Activated CD4-positive, alpha-beta T cell treated with anti-CD3 and anti-CD28 coated beads for 36 hours (primary cell): ENCODE measurements at regions of chr22 and their contacts with region 1.

Region 1: GRCh38 chr22:31749636-31750364 is at the start of gene PRR14L:
- DNase-seq: peak; percentile 100
- ATAC-seq: peak; percentile 71
- H3K4me3 Mint-ChIP-seq: peak within 1 kb of the TSS; percentile 89
- H3K27ac Mint-ChIP-seq: peak within 1 kb of the TSS; percentile 93
- H3K4me1 Mint-ChIP-seq: peaks cover 43% of the 10 kb centered on the region
- H3K27me3 Mint-ChIP-seq: no peaks in the 10 kb centered on the region
- total RNA-seq, gene PRR14L: 48.2 to 52.2 TPM

Region 2: DNA sequence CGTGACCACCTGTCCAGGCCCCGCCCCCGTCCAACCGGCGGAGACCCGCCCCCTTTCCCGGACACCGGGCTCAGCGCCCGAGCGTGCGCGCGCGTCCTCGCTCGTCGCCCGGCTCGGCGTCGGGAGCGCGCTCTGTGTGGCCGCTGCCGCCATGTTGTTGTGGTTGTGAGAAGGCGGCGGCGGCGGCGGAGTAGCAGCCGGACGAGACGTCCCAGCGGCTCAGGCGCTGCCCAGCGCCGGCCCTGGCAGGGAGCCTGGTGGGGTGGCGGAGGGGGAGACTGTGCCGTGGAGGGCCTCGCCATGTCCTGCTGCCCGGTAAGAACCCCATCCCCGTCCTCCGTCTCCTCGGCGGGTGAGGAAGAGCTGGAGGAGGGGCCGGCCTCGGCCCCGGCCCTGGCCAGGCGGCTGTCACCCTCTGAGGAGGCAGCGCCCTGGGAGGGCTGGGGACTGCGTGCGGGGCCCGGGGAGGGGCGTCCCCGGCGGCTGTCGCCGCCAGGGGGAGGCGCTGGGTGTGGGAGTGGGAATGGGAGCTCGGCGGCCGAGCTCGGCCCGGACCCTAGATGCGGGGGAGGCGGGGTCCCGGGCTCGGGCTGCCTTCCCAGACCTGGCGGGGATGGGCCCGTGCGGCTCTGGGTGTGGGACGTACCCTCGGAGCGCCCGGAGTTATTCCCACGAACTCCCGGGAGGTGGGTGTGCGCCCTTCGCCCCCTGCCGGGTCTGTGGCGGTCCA is 1866.6 kb before region 1 on chr22 and contains the start of gene MTMR3:
- CTCF ChIA-PET with region 1: no interaction called
- POLR2A ChIA-PET with region 1: no interaction called
- intact Hi-C with region 1: loop called in 1 of 2 experiments (anchors 2 kb)
- DNase-seq: peak; percentile 95
- ATAC-seq: peak; percentile 83
- H3K4me3 Mint-ChIP-seq: peak within 1 kb of the TSS; percentile 89
- H3K27ac Mint-ChIP-seq: peak within 1 kb of the TSS; percentile 84
- H3K4me1 Mint-ChIP-seq: peaks cover 6% of the 10 kb centered on the region
- H3K27me3 Mint-ChIP-seq: no peaks in the 10 kb centered on the region
- total RNA-seq, gene MTMR3: 19.2 to 22.8 TPM

Region 3: GRCh38 chr22:31080848-31081649 is 668.8 kb before region 1 on chr22 and contains the start of gene SMTN:
- CTCF ChIA-PET with region 1: no interaction called
- POLR2A ChIA-PET with region 1: no interaction called
- intact Hi-C with region 1: loop called in 1 of 2 experiments (anchors 1 kb)
- DNase-seq: peak; percentile 92
- ATAC-seq: peak; percentile 67
- H3K4me3 Mint-ChIP-seq: peak within 1 kb of the TSS; percentile 82
- H3K27ac Mint-ChIP-seq: peak within 1 kb of the TSS; percentile 63
- H3K4me1 Mint-ChIP-seq: peaks cover 30% of the 10 kb centered on the region
- H3K27me3 Mint-ChIP-seq: no peaks in the 10 kb centered on the region
- total RNA-seq, gene SMTN: 40.1 to 45.8 TPM

Region 4: GRCh38 chr22:31399211-31400028 is 350.4 kb before region 1 on chr22 and contains the start of gene DRG1:
- CTCF ChIA-PET with region 1: no interaction called
- POLR2A ChIA-PET with region 1: no interaction called
- intact Hi-C with region 1: loop called in 1 of 2 experiments (anchors 1 kb)
- DNase-seq: peak; percentile 99
- ATAC-seq: peak; percentile 98
- H3K4me3 Mint-ChIP-seq: peak within 1 kb of the TSS; percentile 99
- H3K27ac Mint-ChIP-seq: peak within 1 kb of the TSS; percentile 91
- H3K4me1 Mint-ChIP-seq: peaks cover 18% of the 10 kb centered on the region
- H3K27me3 Mint-ChIP-seq: peaks cover under 1% of the 10 kb centered on the region
- total RNA-seq, gene DRG1: 104 to 106 TPM

Region 5: GRCh38 chr22:31474743-31475142 is 275.1 kb before region 1 on chr22:
- CTCF ChIA-PET with region 1: no interaction called
- POLR2A ChIA-PET with region 1: no interaction called
- intact Hi-C with region 1: no loop called
- DNase-seq: no peak
- ATAC-seq: no peak
- H3K4me3 Mint-ChIP-seq: no peak overlapping the region
- H3K27ac Mint-ChIP-seq: no peak overlapping the region
- H3K4me1 Mint-ChIP-seq: peaks cover 29% of the 10 kb centered on the region
- H3K27me3 Mint-ChIP-seq: no peaks in the 10 kb centered on the region

Region 6: DNA sequence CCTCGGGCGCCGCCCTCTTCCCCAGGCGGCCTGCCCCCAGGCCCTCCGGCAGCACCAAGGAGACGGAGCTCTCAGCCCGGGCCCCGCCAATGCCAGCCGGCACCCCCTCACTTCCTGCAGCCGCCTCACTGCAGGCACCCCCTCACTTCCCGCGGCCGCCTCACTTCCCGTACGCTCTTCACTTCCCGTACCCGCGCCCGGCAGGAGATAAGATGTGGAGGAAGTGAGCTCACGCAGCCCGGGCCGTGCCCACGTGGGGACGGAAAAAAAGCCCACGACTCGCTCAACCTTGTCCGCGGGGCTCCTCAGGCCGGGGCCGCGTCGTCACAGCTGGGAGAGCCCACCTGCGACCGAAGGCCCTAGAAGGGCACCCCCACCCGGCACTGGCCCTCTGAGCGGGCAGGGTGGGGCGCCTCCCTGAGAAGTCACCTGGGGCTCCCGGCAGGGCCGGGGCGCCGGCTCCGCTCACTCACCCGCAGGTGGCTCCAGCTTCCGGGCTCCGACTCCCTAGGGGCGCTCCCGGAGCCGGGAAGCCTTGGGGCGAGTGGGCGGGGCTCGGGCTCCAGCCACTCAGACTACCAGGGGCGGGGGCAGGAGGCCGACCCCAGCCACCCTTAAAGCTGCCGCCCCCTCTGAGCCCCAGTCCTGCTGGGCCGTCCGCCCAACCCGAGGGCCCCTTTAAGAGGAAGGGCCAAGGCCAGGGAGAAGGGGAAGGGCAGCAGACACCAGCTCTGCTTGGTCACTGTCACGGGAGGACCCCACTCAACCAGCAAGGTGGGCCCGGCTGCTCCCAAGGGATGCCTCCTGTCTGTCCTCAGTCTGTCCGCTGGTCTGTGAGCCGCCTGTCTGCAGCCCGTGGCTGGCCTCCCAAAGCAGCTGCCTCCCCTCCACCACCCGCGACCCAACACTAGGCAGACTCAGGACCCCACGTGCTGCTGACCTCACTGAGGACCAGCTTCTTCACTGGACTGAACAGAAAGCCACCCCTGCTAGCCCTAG is 119.2 kb before region 1 on chr22:
- CTCF ChIA-PET with region 1: no interaction called
- POLR2A ChIA-PET with region 1: interaction called, 6 read pairs
- intact Hi-C with region 1: loop called in 1 of 2 experiments (anchors 1 kb)
- DNase-seq: peak; percentile 93
- ATAC-seq: peak; percentile 82
- H3K4me3 Mint-ChIP-seq: peak overlapping the region; percentile 81
- H3K27ac Mint-ChIP-seq: peak overlapping the region; percentile 89
- H3K4me1 Mint-ChIP-seq: peaks cover 60% of the 10 kb centered on the region
- H3K27me3 Mint-ChIP-seq: no peaks in the 10 kb centered on the region

Region 7: GRCh38 chr22:31829505-31829904 is 79.7 kb after region 1 on chr22:
- CTCF ChIA-PET with region 1: no interaction called
- POLR2A ChIA-PET with region 1: no interaction called
- intact Hi-C with region 1: loop called in 1 of 2 experiments (anchors 2 kb)
- DNase-seq: peak; percentile 76
- ATAC-seq: peak; percentile 98
- H3K4me3 Mint-ChIP-seq: peak overlapping the region; percentile 4
- H3K27ac Mint-ChIP-seq: peak overlapping the region; percentile 88
- H3K4me1 Mint-ChIP-seq: peaks cover 31% of the 10 kb centered on the region
- H3K27me3 Mint-ChIP-seq: no peaks in the 10 kb centered on the region

Region 8: DNA sequence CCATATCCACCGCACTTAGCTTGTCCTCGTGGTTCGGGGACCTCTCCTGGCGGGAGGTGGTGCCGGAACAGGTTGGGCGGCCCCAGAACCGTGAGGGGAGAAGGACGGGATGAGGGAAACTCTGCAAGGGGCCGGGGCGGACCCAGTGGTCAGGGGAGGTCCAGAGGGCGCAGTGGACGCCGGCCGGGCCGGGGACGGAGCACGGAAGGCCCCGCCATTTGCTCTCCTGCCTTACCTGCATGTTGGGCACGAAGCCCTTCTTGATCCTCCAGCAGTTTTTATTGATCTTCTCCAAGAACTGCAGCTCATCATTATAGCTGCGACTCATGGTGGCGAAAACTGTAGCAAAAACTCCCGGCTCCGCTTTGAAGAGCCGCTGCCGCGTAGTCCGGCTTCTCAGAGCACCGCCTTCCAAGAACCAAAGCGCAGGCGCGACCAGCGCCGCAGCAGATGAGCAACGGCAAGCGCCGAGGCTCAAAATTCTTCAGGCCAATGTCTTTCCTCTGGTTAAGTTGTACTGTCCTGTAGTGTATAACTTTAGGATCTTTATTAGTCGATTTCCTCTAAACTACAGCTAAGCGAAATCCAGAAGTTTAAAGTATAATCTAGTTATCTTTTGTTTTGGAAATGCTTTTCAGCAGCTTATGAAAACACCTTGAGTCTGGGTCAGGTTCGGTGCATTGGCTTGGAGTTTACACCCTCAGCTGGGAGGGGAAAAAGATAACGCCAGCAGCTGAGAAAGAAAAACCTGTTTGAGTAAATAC is 662.2 kb after region 1 on chr22 and contains the start of gene RTCB:
- CTCF ChIA-PET with region 1: no interaction called
- POLR2A ChIA-PET with region 1: no interaction called
- intact Hi-C with region 1: loop called in 1 of 2 experiments (anchors 5 kb)
- DNase-seq: peak; percentile 95
- ATAC-seq: peak; percentile 83
- H3K4me3 Mint-ChIP-seq: peak within 1 kb of the TSS; percentile 93
- H3K27ac Mint-ChIP-seq: peak within 1 kb of the TSS; percentile 95
- H3K4me1 Mint-ChIP-seq: peaks cover 41% of the 10 kb centered on the region
- H3K27me3 Mint-ChIP-seq: no peaks in the 10 kb centered on the region
- total RNA-seq, gene RTCB: 60.9 to 86.3 TPM